ENCODE measurements at regions of chr2 and their contacts with region 1.

Region 1: DNA sequence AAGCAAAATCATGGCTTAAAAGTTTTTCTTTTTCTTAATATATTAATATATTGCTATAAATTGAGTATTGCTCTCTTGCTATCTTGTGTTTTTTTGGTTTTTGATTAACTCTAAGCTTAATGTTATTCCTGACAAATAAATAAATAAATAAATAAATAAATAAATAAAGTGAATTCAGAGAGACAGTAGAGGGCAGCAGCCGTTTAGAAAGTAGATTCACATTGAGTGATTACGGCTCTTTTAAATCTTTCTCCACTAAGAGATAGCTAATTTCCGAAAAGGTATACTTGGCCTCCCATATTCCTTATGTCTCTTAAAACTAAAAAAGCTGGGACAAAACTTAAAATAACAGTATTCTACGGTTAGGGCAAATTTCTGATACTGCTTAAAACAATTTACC is 34.3 kb downstream of the MSH2 start:
- DNase-seq: no peak
- H3K4me3 ChIP-seq: no peak overlapping the region
- H3K27ac ChIP-seq: no peak overlapping the region
- H3K4me1 ChIP-seq: no peaks in the 10 kb centered on the region
- H3K27me3 ChIP-seq: no peaks in the 10 kb centered on the region
- CTCF ChIP-seq: peak; percentile 40 to 48 (median 45)
- EP300 ChIP-seq: no peak
- POLR2A ChIP-seq: no peak

Region 2: GRCh38 chr2:47198985-47199451 is 238.3 kb before region 1 on chr2:
- intact Hi-C with region 1: no loop called
- DNase-seq: no peak
- H3K4me3 ChIP-seq: no peak overlapping the region
- H3K27ac ChIP-seq: no peak overlapping the region
- H3K4me1 ChIP-seq: peaks cover 0 to 4% (median under 1%) of the 10 kb centered on the region in 4 donors
- H3K27me3 ChIP-seq: no peaks in the 10 kb centered on the region
- CTCF ChIP-seq: no peak
- EP300 ChIP-seq: no peak
- POLR2A ChIP-seq: no peak

Region 3: DNA sequence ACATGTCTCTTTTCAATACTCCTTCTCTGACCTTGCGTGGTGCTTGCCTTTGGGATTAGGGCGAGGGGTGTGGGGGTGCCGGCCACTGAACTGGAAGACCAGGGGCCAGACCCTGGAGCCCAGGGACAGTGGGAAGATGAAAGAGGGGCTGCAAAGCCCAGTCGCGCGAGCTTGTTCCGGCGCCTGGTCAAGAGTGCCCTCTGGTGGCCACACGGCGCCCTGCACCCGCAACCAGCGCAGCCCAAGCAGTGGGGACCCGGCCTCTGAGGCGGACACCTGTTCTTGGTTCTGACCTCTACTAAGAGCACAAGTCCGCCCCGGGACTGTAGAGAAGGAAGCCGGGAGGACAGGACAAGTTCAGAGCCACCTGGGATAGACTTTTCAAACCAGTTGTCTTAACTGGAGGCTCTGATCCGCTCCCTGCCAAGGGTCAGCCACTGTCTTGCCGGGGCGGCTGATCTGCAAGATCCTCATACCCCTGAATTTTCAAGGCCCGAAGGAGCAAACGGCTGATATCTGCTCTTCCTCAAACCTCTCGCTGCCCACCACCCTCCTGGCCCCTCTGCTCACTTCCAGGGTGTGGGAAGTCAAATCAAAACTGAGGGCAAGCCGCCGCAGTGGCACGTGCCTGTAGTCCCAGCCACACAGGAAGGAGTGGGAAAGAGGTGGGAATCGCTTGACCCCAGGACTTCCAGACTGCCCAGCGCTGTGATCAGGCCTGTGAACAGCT is 330.8 kb after region 1 on chr2:
- intact Hi-C with region 1: loop called (anchors 1 kb)
- DNase-seq: peak; percentile 92
- H3K4me3 ChIP-seq: peak overlapping the region in 2 of 4 donors; percentile 22 to 34
- H3K27ac ChIP-seq: no peak overlapping the region
- H3K4me1 ChIP-seq: peaks cover 0 to 7% (median 7%) of the 10 kb centered on the region in 4 donors
- H3K27me3 ChIP-seq: peaks cover 0 to 7% (median 0%) of the 10 kb centered on the region in 4 donors
- CTCF ChIP-seq: peak; percentile 94 to 100 (median 99)
- EP300 ChIP-seq: no peak
- POLR2A ChIP-seq: no peak

Measured in esophagus muscularis mucosa (tissue), 4 donors.